Naive thymus-derived CD4-positive, alpha-beta T cell (primary cell): ENCODE measurements at regions of chrX and their contacts with region 1.

Region 1: GRCh38 chrX:134026565-134027311 is 41.3 kb upstream of the GPC3 start:
- DNase-seq: peak in 8 of 9 donors; percentile 8 to 51 (median 38)
- ATAC-seq: peak; percentile 65
- H3K4me3 ChIP-seq: no peak overlapping the region
- H3K4me3 Mint-ChIP-seq: peak overlapping the region; percentile 38 to 76 (median 56)
- H3K27ac ChIP-seq: no peak overlapping the region
- H3K27ac Mint-ChIP-seq: peak overlapping the region in 1 of 9 donors; percentile 13
- H3K4me1 ChIP-seq: no peaks in the 10 kb centered on the region
- H3K4me1 Mint-ChIP-seq: peaks cover 0 to 14% (median 10%) of the 10 kb centered on the region in 7 donors
- H3K27me3 ChIP-seq: no peaks in the 10 kb centered on the region
- H3K27me3 Mint-ChIP-seq: peaks cover 0 to 3% (median 0%) of the 10 kb centered on the region in 5 donors

Region 2: GRCh38 chrX:133745349-133745748 is 281.4 kb before region 1 on chrX:
- CTCF ChIA-PET with region 1: interaction called, 4 read pairs
- POLR2A ChIA-PET with region 1: no interaction called
- intact Hi-C with region 1: loop called in 1 of 2 experiments (anchors 1 kb)
- DNase-seq: peak in 7 of 9 donors; percentile 30 to 77 (median 59)
- ATAC-seq: peak; percentile 87
- H3K4me3 ChIP-seq: no peak overlapping the region
- H3K4me3 Mint-ChIP-seq: peak overlapping the region in 7 of 10 donors; percentile 7 to 57 (median 36)
- H3K27ac ChIP-seq: peak overlapping the region; percentile 14
- H3K27ac Mint-ChIP-seq: peak overlapping the region in 8 of 9 donors; percentile 71 to 94 (median 80)
- H3K4me1 ChIP-seq: peaks cover 0 to 49% of the 10 kb centered on the region in 2 donors
- H3K4me1 Mint-ChIP-seq: peaks cover 11 to 75% (median 65%) of the 10 kb centered on the region in 7 donors
- H3K27me3 ChIP-seq: no peaks in the 10 kb centered on the region
- H3K27me3 Mint-ChIP-seq: no peaks in the 10 kb centered on the region

Region 3: DNA sequence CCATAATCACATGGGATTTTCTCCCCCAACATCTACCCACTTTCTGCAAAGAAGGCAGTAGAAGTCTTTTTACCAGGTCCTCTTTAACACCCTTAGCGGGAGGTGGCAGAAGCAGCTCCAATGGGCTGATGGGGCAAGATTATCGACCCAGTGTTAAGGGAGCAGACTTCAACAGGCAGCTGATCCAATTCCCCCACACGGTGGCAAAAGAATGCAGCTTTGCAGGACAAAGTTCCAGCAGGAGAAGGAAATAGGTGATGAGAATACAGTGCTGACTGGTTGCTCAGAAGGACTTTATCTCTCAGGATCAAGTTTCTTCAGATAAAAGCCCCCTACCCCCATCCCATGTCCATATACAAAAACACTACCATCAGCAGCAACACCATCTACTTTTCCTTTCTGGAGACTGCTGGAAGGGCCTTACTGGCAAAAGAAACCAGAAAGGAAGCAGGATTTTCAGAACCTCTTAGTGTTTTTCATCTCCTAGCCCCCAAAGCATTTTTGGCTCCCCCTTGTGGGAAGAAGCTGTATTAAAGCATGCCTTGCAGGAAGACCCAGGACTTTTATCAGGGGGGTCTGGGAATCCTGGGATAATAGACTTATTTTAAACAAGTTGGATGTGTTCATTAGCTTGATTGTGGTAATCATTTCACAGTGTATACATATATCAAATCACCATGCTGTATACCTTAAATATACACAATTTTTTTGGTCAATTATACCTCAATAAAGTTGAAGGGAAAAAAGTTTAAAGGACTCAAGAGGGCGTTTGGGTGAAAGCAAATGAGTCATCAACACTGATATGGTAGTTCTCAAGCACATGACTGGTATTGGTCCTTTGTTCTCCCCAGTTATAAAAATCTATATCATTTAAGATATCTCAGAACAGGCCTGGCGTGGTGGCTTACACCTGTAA is 187.7 kb before region 1 on chrX:
- CTCF ChIA-PET with region 1: no interaction called
- POLR2A ChIA-PET with region 1: no interaction called
- intact Hi-C with region 1: loop called in 1 of 2 experiments (anchors 2 kb)
- DNase-seq: peak in 8 of 9 donors; percentile 4 to 49 (median 24)
- ATAC-seq: no peak
- H3K4me3 ChIP-seq: no peak overlapping the region
- H3K4me3 Mint-ChIP-seq: no peak overlapping the region
- H3K27ac ChIP-seq: no peak overlapping the region
- H3K27ac Mint-ChIP-seq: no peak overlapping the region
- H3K4me1 ChIP-seq: no peaks in the 10 kb centered on the region
- H3K4me1 Mint-ChIP-seq: no peaks in the 10 kb centered on the region
- H3K27me3 ChIP-seq: no peaks in the 10 kb centered on the region
- H3K27me3 Mint-ChIP-seq: no peaks in the 10 kb centered on the region

Region 4: DNA sequence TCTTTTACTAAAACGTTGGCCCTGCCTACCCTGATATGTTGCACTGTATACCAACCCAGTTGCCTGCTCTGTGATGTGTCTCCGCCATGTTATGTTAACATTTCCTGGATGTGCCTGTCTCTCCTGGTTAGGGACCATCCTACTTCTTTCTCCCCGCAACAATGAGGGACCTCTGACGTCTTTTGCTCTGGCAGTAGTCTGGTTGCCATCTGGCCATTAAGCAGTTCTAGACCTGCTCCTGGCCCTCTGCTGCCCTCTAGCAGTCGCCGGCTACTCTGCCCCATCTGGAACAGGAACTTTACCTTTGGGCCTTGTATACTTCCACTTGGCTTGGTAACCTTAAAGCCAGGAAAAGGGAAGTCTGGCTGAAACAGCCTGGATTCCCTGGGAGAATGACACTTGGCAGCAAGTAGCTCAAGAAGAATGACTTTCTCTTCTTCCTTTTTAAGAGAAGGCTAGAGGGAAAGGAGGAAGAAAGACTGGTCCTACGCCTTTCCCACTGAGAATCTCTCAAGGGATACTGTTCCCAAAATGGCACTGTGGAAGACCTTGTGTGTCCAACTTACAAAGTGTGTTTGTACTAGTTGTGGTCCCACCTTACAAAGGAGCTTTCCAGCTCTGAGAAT is 104.9 kb before region 1 on chrX:
- CTCF ChIA-PET with region 1: no interaction called
- POLR2A ChIA-PET with region 1: no interaction called
- intact Hi-C with region 1: loop called in 1 of 2 experiments (anchors 10 kb)
- DNase-seq: peak in 5 of 9 donors; percentile 7 to 33 (median 22)
- ATAC-seq: no peak
- H3K4me3 ChIP-seq: peak overlapping the region; percentile 24
- H3K4me3 Mint-ChIP-seq: peak overlapping the region in 5 of 10 donors; percentile 7 to 90 (median 83)
- H3K27ac ChIP-seq: no peak overlapping the region
- H3K27ac Mint-ChIP-seq: peak overlapping the region in 7 of 9 donors; percentile 38 to 95 (median 92)
- H3K4me1 ChIP-seq: peaks cover 13 to 17% of the 10 kb centered on the region in 2 donors
- H3K4me1 Mint-ChIP-seq: peaks cover 4 to 39% (median 26%) of the 10 kb centered on the region in 7 donors
- H3K27me3 ChIP-seq: no peaks in the 10 kb centered on the region
- H3K27me3 Mint-ChIP-seq: no peaks in the 10 kb centered on the region

Region 5: DNA sequence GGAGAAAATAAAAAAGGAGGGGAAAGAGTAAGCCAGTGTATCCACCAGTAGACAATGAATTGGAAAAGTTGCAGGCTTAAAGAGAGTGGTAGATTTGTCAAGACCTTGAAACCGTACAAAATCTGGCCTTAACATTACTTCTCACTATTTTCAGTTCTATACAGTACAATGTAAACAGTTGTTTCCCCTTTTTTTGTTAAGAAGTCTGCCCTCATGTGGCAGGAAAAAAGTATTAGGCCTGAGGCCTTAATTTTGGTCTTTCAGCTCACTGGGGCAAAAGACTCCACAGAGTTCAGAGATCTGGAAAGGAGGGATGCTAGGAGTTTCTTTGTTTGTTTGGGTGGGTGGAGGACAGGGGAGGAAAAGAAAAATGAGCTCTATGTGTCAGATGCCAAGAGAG is 117.5 kb after region 1 on chrX:
- CTCF ChIA-PET with region 1: no interaction called
- POLR2A ChIA-PET with region 1: no interaction called
- intact Hi-C with region 1: loop called in 1 of 2 experiments (anchors 10 kb)
- DNase-seq: peak in 2 of 9 donors; percentile 3 to 15
- ATAC-seq: peak; percentile 37
- H3K4me3 ChIP-seq: no peak overlapping the region
- H3K4me3 Mint-ChIP-seq: no peak overlapping the region
- H3K27ac ChIP-seq: no peak overlapping the region
- H3K27ac Mint-ChIP-seq: peak overlapping the region in 2 of 9 donors; percentile 2 to 50
- H3K4me1 ChIP-seq: no peaks in the 10 kb centered on the region
- H3K4me1 Mint-ChIP-seq: peaks cover 0 to 5% (median 0%) of the 10 kb centered on the region in 7 donors
- H3K27me3 ChIP-seq: no peaks in the 10 kb centered on the region
- H3K27me3 Mint-ChIP-seq: peaks cover 0 to 7% (median 0%) of the 10 kb centered on the region in 5 donors

Region 6: DNA sequence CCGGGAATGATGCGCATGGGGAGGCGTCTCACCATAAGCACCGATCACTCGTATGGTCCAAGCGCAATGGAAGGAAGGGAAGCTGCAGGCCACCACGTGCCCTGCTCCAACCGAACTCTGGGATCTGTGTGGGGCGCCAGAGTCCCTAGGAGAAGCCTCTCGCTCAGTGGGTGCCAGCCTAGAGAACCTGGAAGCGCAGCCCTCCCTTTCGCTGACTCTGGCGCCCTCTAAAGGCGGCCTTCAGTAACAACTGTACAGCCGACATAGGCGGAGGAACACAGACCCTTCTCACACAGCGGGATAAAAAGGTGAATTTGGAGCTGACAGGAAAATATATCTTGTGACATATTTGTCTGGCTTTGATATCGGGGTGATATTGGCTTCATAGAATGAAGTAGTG is 1569.8 kb after region 1 on chrX:
- CTCF ChIA-PET with region 1: no interaction called
- POLR2A ChIA-PET with region 1: no interaction called
- intact Hi-C with region 1: no loop called
- DNase-seq: peak in 8 of 9 donors; percentile 8 to 44 (median 14)
- ATAC-seq: peak; percentile 68
- H3K4me3 ChIP-seq: no peak overlapping the region
- H3K4me3 Mint-ChIP-seq: no peak overlapping the region
- H3K27ac ChIP-seq: no peak overlapping the region
- H3K27ac Mint-ChIP-seq: no peak overlapping the region
- H3K4me1 ChIP-seq: no peaks in the 10 kb centered on the region
- H3K4me1 Mint-ChIP-seq: peaks cover 0 to 3% (median 0%) of the 10 kb centered on the region in 7 donors
- H3K27me3 ChIP-seq: no peaks in the 10 kb centered on the region
- H3K27me3 Mint-ChIP-seq: peaks cover 0 to 19% (median 5%) of the 10 kb centered on the region in 5 donors